Uterus (tissue), 4 donors: ENCODE measurements at regions of chr19 and their contacts with region 1.

Region 1: GRCh38 chr19:9413240-9413954 is 22.0 kb downstream of the ZNF266 start:
- DNase-seq: no peak
- H3K4me3 ChIP-seq: no peak overlapping the region
- H3K27ac ChIP-seq: no peak overlapping the region
- H3K4me1 ChIP-seq: no peaks in the 10 kb centered on the region
- H3K27me3 ChIP-seq: no peaks in the 10 kb centered on the region
- CTCF ChIP-seq: no peak
- POLR2A ChIP-seq: no peak

Region 2: DNA sequence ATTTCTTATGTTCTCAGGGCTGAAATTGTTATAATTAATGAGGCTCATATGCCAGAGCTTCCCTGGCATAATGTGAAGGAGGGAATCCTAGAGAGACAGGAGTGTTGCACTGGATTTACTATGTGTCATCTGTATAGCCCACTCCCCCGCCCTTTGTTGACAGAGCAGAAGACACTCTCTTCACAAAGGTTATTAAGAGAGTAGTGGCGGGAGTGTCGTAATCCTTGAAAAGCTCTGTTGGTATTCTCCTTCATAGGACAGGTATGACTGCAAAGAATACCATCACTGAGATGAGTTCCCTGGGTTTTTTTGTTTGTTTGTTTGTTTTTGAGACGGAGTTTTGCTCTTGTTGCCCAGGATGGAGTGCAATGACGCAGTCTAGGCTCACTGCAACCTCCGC is 156.9 kb after region 1 on chr19:
- intact Hi-C with region 1: loop called (anchors 10 kb)
- DNase-seq: no peak
- H3K4me3 ChIP-seq: no peak overlapping the region
- H3K27ac ChIP-seq: no peak overlapping the region
- H3K4me1 ChIP-seq: no peaks in the 10 kb centered on the region
- H3K27me3 ChIP-seq: no peaks in the 10 kb centered on the region
- CTCF ChIP-seq: no peak
- POLR2A ChIP-seq: no peak